ENCODE measurements at regions of chr17 and their contacts with region 1.

Region 1: DNA sequence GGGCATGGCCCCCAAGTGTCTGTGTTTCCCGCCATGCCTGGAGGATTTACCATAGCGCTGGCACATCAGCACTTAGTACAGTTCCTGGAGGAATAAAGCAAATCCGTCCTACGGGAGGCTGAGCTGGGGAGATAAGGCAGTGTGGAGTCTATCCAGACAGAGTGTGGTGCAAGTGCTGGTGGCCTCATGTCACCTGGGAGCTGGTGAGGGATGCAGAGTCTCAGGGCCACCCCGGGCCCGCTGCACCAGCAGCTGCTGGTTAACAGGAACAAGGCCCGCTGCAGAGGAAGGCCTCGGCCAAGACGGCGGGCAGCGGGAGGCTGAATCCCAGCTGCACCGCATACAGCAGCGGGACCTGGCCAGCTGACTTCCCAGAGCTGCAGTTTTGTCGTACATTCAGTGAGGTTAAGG is 57.3 kb upstream of the CDC42EP4 start:
- DNase-seq: no peak
- H3K4me3 ChIP-seq: no peak overlapping the region
- H3K27ac ChIP-seq: no peak overlapping the region
- H3K4me1 ChIP-seq: peaks cover 0 to 6% of the 10 kb centered on the region in 2 donors
- H3K27me3 ChIP-seq: no peaks in the 10 kb centered on the region
- CTCF ChIP-seq: no peak
- POLR2A ChIP-seq: no peak

Region 2: GRCh38 chr17:73255671-73256181 is 113.4 kb before region 1 on chr17:
- intact Hi-C with region 1: loop called (anchors 2 kb)
- DNase-seq: no peak
- H3K4me3 ChIP-seq: no peak overlapping the region
- H3K27ac ChIP-seq: no peak overlapping the region
- H3K4me1 ChIP-seq: no peaks in the 10 kb centered on the region
- H3K27me3 ChIP-seq: no peaks in the 10 kb centered on the region
- CTCF ChIP-seq: peak; percentile 93 to 99 (median 98)
- POLR2A ChIP-seq: no peak

Measured in breast epithelium (tissue), 4 donors.